Cardiac septum (tissue), 1 donor: ENCODE measurements at regions of chr5 and their contacts with region 1.

Region 1: DNA sequence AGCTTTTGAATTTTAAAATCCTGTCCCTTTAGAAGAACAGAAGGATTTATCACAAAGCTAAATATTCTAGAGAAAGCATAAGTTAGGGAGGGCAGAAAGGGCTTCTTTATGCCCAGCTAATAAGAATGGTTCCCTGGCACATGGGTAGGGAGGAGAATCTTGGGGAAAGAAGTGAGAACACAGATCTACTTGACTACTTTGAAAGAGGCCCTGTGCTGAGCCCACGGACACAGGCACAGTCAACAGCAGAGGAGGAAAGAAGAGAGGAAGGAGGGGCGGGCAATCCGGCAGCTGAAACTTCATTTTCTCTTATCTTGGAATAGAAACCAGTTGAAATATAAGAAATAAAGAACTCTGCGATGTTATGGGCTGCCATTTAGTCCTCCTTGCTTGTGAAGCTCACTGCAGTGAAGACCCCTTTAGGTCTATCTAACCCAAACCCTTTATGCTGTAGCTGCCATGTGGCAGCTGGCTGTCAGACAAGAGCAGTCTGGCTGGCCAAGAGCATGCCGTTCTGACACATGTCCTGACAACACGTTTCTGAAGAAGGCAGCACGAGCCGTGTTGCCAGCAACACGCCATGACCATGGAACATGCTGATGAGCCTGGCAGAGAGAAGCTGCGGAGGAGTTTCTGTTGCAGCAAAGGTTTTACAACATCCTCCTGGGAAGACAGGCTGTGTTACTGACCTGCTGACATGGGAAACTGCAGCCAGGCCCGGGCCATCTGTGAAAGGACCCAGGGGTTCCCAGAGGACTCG is 34.2 kb downstream of the ABLIM3 start:
- DNase-seq: peak; percentile 85

Region 2: GRCh38 chr5:149141224-149141956 is 34.1 kb before region 1 on chr5 and contains the start of gene ABLIM3:
- intact Hi-C with region 1: loop called (anchors 5 kb)
- DNase-seq: peak; percentile 90
- total RNA-seq, gene ABLIM3: 118 TPM

Region 3: GRCh38 chr5:149153751-149154610 is 21.5 kb before region 1 on chr5:
- intact Hi-C with region 1: loop called (anchors 2 kb)
- DNase-seq: no peak

Region 4: DNA sequence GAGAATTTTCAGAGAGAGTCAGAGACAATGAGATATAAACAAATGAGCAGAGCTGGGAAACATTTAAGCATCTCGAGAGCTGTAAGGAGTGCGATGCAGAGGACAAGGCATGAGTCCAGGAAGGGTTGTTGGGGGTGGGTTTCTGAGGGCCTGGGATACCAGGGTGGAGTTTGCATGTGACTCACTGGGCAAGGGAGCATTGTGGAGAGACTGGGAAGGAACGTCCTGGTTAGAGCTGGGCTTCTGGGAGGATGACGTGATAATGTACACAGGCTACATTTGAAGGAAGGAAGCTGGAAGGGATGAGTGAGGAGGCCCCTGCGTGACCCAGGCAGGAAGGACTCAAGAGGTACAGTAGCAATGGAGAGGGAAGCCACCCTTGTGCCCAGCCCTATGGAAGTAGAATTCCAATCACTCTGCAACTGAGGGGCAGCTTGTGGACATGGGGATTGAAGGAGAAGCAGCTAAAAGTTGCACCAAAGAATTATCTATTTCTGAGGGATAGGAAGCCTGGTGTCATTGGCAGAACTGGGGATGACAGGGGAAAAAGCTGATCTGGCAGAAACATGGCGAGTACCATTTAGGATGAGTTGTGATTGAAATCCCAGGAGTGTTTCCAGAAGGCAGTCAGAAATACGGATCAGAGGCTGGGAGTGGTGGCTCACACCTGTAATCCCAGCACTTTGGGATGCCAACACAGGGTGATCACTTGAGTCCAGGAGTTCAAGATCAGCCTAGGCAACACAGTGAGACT is 36.8 kb after region 1 on chr5:
- intact Hi-C with region 1: loop called (anchors 5 kb)
- DNase-seq: no peak

Region 5: DNA sequence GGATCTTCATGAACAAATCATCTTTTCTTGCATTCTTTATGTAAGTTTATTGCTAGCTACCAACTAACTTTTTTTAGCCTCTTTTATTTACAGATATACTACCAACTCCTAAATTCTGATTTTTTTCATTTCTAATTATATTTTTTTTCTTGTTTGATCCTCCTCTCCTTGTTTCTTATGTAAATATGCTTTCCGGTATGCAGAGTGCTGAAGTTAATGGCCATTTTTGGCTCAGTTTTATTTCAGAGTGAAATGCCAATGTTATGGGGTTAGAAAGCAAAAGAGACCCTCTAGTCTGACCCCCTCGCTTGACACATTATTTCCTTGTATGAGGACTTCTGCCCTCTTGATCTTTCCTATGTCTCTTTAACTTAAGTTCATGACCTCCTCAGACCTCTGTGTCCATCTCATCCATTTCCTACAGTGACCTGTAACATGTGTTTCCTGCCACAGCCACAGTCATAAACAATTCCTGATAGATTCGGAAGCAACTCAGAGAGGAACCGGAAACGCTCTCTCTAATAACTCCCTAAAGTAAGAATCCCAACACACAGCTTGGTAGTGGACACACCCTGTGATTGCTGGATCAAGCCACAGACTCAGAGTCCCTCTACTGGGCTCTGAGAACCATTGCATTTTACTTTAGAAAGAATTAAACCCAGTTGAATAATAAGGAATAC is 53.2 kb after region 1 on chr5:
- intact Hi-C with region 1: no loop called
- DNase-seq: no peak